ENCODE measurements at regions of chr5 and their contacts with region 1.

Region 1: DNA sequence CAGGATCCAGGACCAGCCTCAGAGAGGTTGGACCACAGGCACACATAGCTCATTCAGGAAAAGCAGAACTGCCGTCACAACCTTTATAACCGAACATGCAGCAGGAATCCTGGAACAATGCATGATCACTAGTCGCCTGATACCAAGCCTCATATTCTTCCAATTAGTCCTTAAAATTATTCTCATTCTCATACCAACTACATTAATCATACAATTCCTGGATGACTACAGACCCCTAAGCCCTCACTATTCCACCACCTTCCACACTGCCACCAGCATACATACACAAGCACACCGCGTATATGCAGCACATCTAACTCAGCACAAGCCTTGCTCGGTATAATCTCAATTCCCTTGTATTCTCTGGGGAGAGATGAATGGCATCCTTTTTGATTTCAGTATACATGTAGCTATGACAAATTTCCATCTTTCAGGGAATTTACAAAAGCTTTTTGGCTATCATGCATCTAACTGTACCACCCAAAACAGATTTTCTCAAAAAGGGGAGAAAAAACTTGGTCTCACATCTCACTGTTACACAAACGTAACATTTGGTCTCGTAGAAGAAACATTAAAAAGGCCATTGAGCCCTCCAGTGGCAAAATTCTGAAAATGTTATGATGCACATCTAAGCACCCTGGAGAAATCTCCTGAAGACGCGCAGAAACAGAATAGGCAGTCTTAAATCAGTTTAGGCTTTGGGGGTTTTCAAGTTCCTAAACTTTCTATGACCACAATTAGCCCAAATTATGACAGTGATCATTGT is 46.2 kb downstream of the MCTP1 start:
- DNase-seq: no peak
- ATAC-seq: no peak

Region 2: DNA sequence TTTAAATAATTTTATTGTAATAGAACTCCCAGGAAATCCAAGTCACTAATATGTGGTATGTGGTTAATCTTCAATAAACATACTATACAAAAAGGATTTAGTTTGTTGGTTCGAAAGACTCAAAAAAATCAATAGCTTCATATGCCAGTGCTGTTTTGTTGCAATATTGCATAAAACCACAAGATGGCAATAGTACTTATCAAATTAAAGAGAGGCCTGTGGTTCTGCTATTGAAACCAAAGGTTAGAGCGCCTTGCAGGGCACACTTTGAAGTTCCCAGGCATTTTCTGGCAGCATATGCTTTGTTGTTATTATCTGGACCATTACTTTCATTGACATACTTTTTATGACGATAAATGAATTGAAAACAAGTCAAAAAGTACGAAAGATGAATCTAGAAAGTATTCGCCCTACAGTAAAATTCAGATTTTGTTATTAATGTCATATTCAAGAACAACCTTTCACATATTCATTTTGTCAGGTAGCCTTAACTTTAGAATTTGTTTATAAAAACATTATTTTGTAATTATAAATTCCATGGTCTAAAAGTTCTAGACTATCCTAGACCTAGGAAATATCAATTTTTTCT is 270.1 kb before region 1 on chr5:
- intact Hi-C with region 1: loop called (anchors 10 kb)
- DNase-seq: no peak
- ATAC-seq: peak; percentile 66

Measured in Right ventricle myocardium superior (tissue), 1 donor.